CD4-positive, alpha-beta memory T cell (primary cell): ENCODE measurements at regions of chr2 and their contacts with region 1.

Region 1: GRCh38 chr2:227890495-227891079 is 19.2 kb downstream of the DAW1 start:
- DNase-seq: peak in 4 of 5 donors; percentile 11 to 41 (median 20)
- H3K4me3 ChIP-seq: no peak overlapping the region
- H3K4me3 Mint-ChIP-seq: no peak overlapping the region
- H3K27ac ChIP-seq: no peak overlapping the region
- H3K27ac Mint-ChIP-seq: no peak overlapping the region
- H3K4me1 ChIP-seq: no peaks in the 10 kb centered on the region
- H3K4me1 Mint-ChIP-seq: peaks cover 0 to 1% (median 0%) of the 10 kb centered on the region in 4 donors
- H3K27me3 ChIP-seq: no peaks in the 10 kb centered on the region
- H3K27me3 Mint-ChIP-seq: peaks cover 2 to 4% of the 10 kb centered on the region in 2 donors

Region 2: DNA sequence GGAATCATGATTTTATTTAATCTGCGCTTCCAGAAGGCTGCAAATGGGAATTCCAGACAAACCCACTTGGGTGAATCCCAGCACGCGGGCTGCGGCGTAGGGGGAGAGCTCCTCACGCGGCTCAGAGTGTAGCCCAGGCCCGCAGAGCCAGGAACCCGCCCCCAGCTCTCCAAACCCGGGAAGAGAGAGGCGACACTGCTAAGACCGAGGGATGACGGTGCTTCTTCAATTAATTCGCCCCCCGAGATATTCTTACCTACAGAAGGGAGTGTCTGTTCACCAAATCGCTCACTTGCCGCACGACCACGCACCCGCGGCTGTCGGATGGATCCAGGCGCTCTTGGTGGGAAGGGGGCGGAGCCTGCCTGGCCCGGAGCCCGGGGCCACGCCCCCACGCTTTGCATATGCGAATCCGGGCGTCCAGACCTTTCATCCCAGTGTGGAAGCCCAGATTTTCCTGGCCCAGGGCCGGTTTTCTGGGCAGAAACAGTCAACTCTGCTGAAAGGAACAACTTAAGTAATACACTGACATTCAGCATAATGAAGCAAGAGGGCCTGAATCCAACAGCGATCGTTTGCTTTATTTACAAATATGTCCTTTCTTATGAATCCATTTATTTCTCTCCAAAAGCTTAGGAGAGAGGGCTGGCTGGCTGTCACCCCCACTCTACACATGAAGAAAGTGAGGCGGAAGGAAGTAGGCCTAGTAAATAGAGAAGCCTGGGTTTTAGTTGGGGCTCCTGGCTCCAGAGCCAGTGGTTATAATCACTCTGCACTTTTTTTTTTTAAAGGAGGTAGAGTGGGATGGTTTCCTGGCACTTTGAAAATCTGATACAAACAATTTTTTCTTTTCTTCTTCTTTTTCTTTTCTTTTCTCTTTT is 172.7 kb before region 1 on chr2 and contains the start of gene SLC19A3:
- CTCF ChIA-PET with region 1: no interaction called
- POLR2A ChIA-PET with region 1: no interaction called
- intact Hi-C with region 1: no loop called
- DNase-seq: no peak
- H3K4me3 ChIP-seq: no peak within 1 kb of the TSS
- H3K4me3 Mint-ChIP-seq: peak within 1 kb of the TSS in 6 of 8 donors; percentile 7 to 58 (median 22)
- H3K27ac ChIP-seq: no peak within 1 kb of the TSS
- H3K27ac Mint-ChIP-seq: no peak within 1 kb of the TSS
- H3K4me1 ChIP-seq: peaks cover 2% of the 10 kb centered on the region
- H3K4me1 Mint-ChIP-seq: peaks cover 0 to 7% (median 0%) of the 10 kb centered on the region in 4 donors
- H3K27me3 ChIP-seq: no peaks in the 10 kb centered on the region
- H3K27me3 Mint-ChIP-seq: peaks cover 9 to 29% of the 10 kb centered on the region in 2 donors
- total RNA-seq, gene SLC19A3: not detected

Region 3: GRCh38 chr2:227816507-227817274 is 73.9 kb before region 1 on chr2:
- CTCF ChIA-PET with region 1: no interaction called
- POLR2A ChIA-PET with region 1: no interaction called
- intact Hi-C with region 1: no loop called
- DNase-seq: no peak
- H3K4me3 ChIP-seq: no peak overlapping the region
- H3K4me3 Mint-ChIP-seq: no peak overlapping the region
- H3K27ac ChIP-seq: no peak overlapping the region
- H3K27ac Mint-ChIP-seq: peak overlapping the region in 3 of 7 donors; percentile 5 to 38 (median 17)
- H3K4me1 ChIP-seq: peaks cover 26% of the 10 kb centered on the region
- H3K4me1 Mint-ChIP-seq: peaks cover 14 to 46% (median 26%) of the 10 kb centered on the region in 4 donors
- H3K27me3 ChIP-seq: no peaks in the 10 kb centered on the region
- H3K27me3 Mint-ChIP-seq: peaks cover 0 to 3% of the 10 kb centered on the region in 2 donors

Region 4: GRCh38 chr2:227871375-227871788 is 19.2 kb before region 1 on chr2 and contains the start of gene DAW1:
- CTCF ChIA-PET with region 1: interaction called, 12 read pairs
- POLR2A ChIA-PET with region 1: no interaction called
- intact Hi-C with region 1: no loop called
- DNase-seq: peak; percentile 51 to 77 (median 67)
- H3K4me3 ChIP-seq: peak within 1 kb of the TSS in 1 of 2 donors; percentile 24
- H3K4me3 Mint-ChIP-seq: peak within 1 kb of the TSS in 6 of 8 donors; percentile 24 to 56 (median 47)
- H3K27ac ChIP-seq: no peak within 1 kb of the TSS
- H3K27ac Mint-ChIP-seq: peak within 1 kb of the TSS in 3 of 7 donors; percentile 24 to 44 (median 38)
- H3K4me1 ChIP-seq: peaks cover 4% of the 10 kb centered on the region
- H3K4me1 Mint-ChIP-seq: peaks cover 0 to 5% (median 0%) of the 10 kb centered on the region in 4 donors
- H3K27me3 ChIP-seq: no peaks in the 10 kb centered on the region
- H3K27me3 Mint-ChIP-seq: peaks cover 16 to 18% of the 10 kb centered on the region in 2 donors
- total RNA-seq, gene DAW1: not detected

Region 5: GRCh38 chr2:227906991-227907390 is 16.4 kb after region 1 on chr2:
- CTCF ChIA-PET with region 1: interaction called, 37 read pairs
- POLR2A ChIA-PET with region 1: no interaction called
- intact Hi-C with region 1: no loop called
- DNase-seq: no peak
- H3K4me3 ChIP-seq: no peak overlapping the region
- H3K4me3 Mint-ChIP-seq: no peak overlapping the region
- H3K27ac ChIP-seq: no peak overlapping the region
- H3K27ac Mint-ChIP-seq: no peak overlapping the region
- H3K4me1 ChIP-seq: no peaks in the 10 kb centered on the region
- H3K4me1 Mint-ChIP-seq: no peaks in the 10 kb centered on the region
- H3K27me3 ChIP-seq: no peaks in the 10 kb centered on the region
- H3K27me3 Mint-ChIP-seq: peaks cover 0 to 1% of the 10 kb centered on the region in 2 donors

Region 6: DNA sequence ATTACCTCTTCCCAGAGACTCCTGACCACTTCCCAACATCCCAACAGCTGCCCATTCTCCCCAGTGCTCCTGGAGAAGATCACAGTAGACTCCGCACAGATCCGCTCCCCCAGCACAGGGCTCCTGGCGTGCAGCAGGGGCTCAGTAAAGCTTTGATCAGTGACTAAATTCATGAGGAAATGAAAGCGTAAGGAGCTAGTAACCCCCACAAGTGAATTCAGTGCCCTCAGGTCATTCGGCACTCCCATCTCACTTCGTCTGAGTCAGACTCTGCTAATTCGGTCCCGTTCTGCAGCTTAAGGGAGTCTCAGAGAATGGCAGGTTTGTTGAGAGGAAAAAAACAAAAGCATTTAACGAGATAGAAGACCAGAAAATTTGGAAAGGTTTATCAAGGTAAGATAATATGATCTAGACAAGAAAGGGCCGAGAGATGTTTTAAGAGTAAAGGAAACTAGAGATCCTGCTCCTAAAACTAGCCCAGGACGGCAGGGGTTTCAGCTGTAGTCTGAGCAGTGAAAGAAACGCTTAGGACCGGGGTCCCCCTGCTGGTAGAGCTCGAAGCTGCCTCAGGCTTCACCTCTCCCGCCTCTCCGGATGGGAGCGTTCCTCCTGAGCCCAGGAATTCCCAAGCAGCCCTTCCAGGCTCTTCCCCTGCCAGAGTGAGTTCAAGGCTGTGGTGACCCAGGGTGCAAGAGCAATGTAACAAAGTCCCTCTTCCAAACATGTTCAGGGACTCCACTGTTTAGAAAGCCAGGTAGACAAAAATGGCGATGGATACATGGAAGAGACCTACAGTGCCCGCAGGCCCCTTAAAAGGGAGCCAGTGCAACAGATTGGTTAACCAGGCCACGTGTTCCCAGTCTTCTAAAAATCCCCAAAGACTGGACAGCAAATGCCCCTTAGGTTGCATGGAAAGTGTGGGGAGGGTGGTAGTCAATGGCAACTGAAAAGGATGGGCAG is 1696.4 kb after region 1 on chr2:
- CTCF ChIA-PET with region 1: no interaction called
- POLR2A ChIA-PET with region 1: no interaction called
- intact Hi-C with region 1: loop called (anchors 5 kb)
- DNase-seq: no peak
- H3K4me3 ChIP-seq: no peak overlapping the region
- H3K4me3 Mint-ChIP-seq: peak overlapping the region in 1 of 8 donors; percentile 10
- H3K27ac ChIP-seq: no peak overlapping the region
- H3K27ac Mint-ChIP-seq: no peak overlapping the region
- H3K4me1 ChIP-seq: no peaks in the 10 kb centered on the region
- H3K4me1 Mint-ChIP-seq: peaks cover 0 to 3% (median 2%) of the 10 kb centered on the region in 4 donors
- H3K27me3 ChIP-seq: no peaks in the 10 kb centered on the region
- H3K27me3 Mint-ChIP-seq: peaks cover 6 to 10% of the 10 kb centered on the region in 2 donors